IMR-90 (cell line): ENCODE measurements at regions of chr6 and their contacts with region 1.

Region 1: DNA sequence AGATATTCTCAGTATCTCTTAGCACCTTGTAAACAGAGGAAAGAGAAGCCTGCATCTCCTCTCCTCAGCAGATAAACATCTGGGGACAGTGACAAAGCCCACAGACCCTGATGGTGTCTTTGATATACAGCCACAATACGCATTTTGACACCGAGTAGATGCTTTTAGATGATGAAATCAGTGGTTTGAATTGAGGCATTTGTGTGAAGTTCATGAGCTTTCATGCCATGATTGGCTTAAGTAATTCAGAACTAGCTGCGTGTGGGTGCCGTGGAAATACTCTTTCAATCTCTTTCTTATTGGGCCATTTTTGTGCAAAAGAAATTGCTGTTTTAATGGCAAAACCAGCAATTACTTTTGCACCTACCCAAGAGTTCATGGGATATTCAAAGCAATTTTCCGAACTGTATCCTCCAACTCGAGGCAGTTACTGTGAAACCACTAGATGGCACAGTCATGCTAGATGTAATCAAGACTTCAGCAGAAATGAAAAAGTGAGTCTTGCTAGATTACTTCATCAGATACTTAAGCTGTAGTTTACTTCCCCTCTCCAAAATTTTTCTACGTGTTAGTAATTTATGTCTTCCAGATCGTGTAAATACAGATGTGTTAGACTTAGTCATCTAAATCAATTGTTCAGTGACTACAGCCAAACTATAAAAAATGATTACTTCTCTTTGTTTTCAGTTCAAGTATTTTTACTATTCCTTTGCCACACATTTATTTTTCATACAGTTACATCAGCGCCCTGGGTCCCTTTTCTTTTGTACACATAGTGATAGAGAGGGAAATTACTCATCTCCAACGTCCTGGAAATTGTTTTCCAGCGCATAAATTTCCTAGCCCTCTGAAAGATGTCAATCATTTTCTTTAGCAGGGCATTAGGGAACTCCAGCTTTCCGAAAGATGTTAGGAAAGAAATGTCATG is 49.4 kb downstream of the IYD start:
- DNase-seq: peak; percentile 84
- ATAC-seq: peak; percentile 88
- H3K4me3 ChIP-seq: no peak overlapping the region
- H3K27ac ChIP-seq: no peak overlapping the region
- H3K4me1 ChIP-seq: no peaks in the 10 kb centered on the region; the same call in 1 of the 2 replicates
- H3K27me3 ChIP-seq: peaks cover 6% of the 10 kb centered on the region
- CTCF ChIP-seq: peak; percentile 76
- POLR2A ChIP-seq: no peak
- RAD21 ChIP-seq: peak; percentile 65

Region 2: DNA sequence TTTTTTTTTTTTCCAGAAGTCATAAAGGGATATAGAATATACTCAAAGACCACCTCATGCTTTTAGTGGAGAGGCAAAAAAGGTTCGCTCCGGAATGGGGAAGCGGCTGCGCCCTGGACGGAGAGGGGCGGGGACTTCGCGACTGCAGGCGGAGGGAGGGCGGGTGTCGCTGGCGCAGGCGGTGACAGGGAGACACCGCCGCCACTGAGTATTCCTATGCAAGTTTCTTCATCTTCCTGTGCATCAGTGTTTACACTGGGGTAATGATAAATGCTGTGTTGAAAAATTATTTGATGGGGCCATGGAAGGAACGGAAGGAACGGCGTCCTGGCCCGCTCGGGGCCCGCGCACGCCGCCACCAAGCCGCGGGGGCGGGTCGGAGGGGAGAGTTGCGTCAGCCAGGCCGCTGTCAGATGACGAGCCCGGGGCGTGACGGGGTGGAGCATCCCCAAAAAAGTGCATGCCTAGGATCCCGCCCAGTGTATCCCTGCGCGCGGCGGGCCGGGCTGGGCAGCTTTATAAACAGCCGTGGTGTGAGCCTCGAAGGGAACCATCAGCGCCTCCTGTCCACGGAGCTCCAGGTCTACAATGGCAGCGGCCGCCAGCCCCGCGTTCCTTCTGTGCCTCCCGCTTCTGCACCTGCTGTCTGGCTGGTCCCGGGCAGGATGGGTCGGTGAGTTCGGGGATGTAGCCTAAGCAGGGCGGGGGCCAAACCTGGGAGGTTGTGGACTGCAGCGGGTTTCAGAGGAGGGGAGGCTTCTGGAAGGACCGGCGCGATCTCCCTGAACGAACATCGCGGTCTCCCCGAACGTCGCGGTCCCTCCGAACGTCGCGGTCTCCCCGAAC is 454.5 kb before region 1 on chr6 and contains the start of gene ULBP1:
- CTCF ChIA-PET with region 1: no interaction called
- POLR2A ChIA-PET with region 1: no interaction called
- dilution Hi-C with region 1: no loop called
- in situ Hi-C with region 1: no loop called
- intact Hi-C with region 1: no loop called
- DNase-seq: peak; percentile 83
- ATAC-seq: peak; percentile 91
- H3K4me3 ChIP-seq: peak within 1 kb of the TSS; percentile 53
- H3K27ac ChIP-seq: peak within 1 kb of the TSS; percentile 6; the same call in 1 of the 2 replicates
- H3K4me1 ChIP-seq: peaks cover 2% of the 10 kb centered on the region; the same call in 1 of the 2 replicates
- H3K27me3 ChIP-seq: peaks cover 56% of the 10 kb centered on the region
- CTCF ChIP-seq: no peak
- POLR2A ChIP-seq: no peak; the same call in 1 of the 2 replicates
- RAD21 ChIP-seq: no peak
- total RNA-seq, gene ULBP1: 0.18 and 0.56 TPM in 2 replicates

Region 3: GRCh38 chr6:150452428-150453243 is 34.5 kb after region 1 on chr6:
- CTCF ChIA-PET with region 1: no interaction called
- POLR2A ChIA-PET with region 1: no interaction called
- dilution Hi-C with region 1: no loop called
- in situ Hi-C with region 1: no loop called
- intact Hi-C with region 1: no loop called
- DNase-seq: no peak
- ATAC-seq: no peak
- H3K4me3 ChIP-seq: no peak overlapping the region
- H3K27ac ChIP-seq: no peak overlapping the region
- H3K4me1 ChIP-seq: no peaks in the 10 kb centered on the region
- H3K27me3 ChIP-seq: no peaks in the 10 kb centered on the region
- CTCF ChIP-seq: no peak
- POLR2A ChIP-seq: no peak
- RAD21 ChIP-seq: no peak

Region 4: GRCh38 chr6:150466196-150466595 is 48.0 kb after region 1 on chr6:
- CTCF ChIA-PET with region 1: no interaction called
- POLR2A ChIA-PET with region 1: no interaction called
- dilution Hi-C with region 1: no loop called
- in situ Hi-C with region 1: no loop called
- intact Hi-C with region 1: no loop called
- DNase-seq: no peak
- ATAC-seq: no peak
- H3K4me3 ChIP-seq: no peak overlapping the region
- H3K27ac ChIP-seq: no peak overlapping the region
- H3K4me1 ChIP-seq: no peaks in the 10 kb centered on the region
- H3K27me3 ChIP-seq: no peaks in the 10 kb centered on the region
- CTCF ChIP-seq: no peak
- POLR2A ChIP-seq: no peak
- RAD21 ChIP-seq: no peak

Region 5: DNA sequence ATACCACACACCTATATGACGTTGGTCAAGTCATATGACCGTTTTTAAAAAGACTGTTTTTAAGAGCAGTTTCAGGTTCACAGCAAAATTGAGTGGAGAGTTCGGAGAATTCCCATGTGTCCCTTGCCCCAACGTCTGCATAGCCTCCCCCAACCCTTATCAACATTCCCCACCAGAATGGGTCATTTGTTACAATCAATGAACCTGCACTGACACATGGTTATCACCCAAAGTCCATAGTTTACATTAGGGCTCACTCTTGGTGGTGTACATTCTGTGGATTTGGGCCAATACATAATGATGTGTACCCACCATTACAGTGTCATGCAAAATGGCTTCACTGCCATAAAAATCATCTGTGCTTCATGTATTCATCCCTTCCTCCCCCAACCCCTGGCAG is 921.2 kb after region 1 on chr6:
- CTCF ChIA-PET with region 1: no interaction called
- POLR2A ChIA-PET with region 1: no interaction called
- dilution Hi-C with region 1: no loop called
- in situ Hi-C with region 1: loop called (anchors 25 kb)
- intact Hi-C with region 1: loop called (anchors 5 kb)
- DNase-seq: no peak
- ATAC-seq: no peak
- H3K4me3 ChIP-seq: no peak overlapping the region
- H3K27ac ChIP-seq: no peak overlapping the region
- H3K4me1 ChIP-seq: no peaks in the 10 kb centered on the region
- H3K27me3 ChIP-seq: no peaks in the 10 kb centered on the region
- CTCF ChIP-seq: no peak
- POLR2A ChIP-seq: no peak
- RAD21 ChIP-seq: no peak